ENCODE measurements at regions of chr7 and their contacts with region 1.

Region 1: GRCh38 chr7:111029574-111030251 is 61.2 kb upstream of the LRRN3 start:
- DNase-seq: peak; percentile 44
- ATAC-seq: peak; percentile 9
- H3K4me3 Mint-ChIP-seq: no peak overlapping the region
- H3K27ac Mint-ChIP-seq: peak overlapping the region; percentile 83
- H3K4me1 Mint-ChIP-seq: peaks cover 53% of the 10 kb centered on the region
- H3K27me3 Mint-ChIP-seq: no peaks in the 10 kb centered on the region

Region 2: GRCh38 chr7:110704219-110704618 is 325.5 kb before region 1 on chr7:
- CTCF ChIA-PET with region 1: no interaction called
- DNase-seq: no peak
- ATAC-seq: no peak
- H3K4me3 Mint-ChIP-seq: no peak overlapping the region
- H3K27ac Mint-ChIP-seq: no peak overlapping the region
- H3K4me1 Mint-ChIP-seq: no peaks in the 10 kb centered on the region
- H3K27me3 Mint-ChIP-seq: no peaks in the 10 kb centered on the region

Region 3: GRCh38 chr7:110994028-110994967 is 35.4 kb before region 1 on chr7:
- CTCF ChIA-PET with region 1: no interaction called
- DNase-seq: no peak
- ATAC-seq: peak; percentile 61
- H3K4me3 Mint-ChIP-seq: no peak overlapping the region
- H3K27ac Mint-ChIP-seq: peak overlapping the region; percentile 42
- H3K4me1 Mint-ChIP-seq: peaks cover 21% of the 10 kb centered on the region
- H3K27me3 Mint-ChIP-seq: no peaks in the 10 kb centered on the region

Region 4: GRCh38 chr7:111082351-111082750 is 52.6 kb after region 1 on chr7:
- CTCF ChIA-PET with region 1: interaction called, 13 read pairs
- DNase-seq: no peak
- ATAC-seq: peak; percentile 14
- H3K4me3 Mint-ChIP-seq: peak overlapping the region; percentile 63
- H3K27ac Mint-ChIP-seq: peak overlapping the region; percentile 97
- H3K4me1 Mint-ChIP-seq: peaks cover 79% of the 10 kb centered on the region
- H3K27me3 Mint-ChIP-seq: no peaks in the 10 kb centered on the region

Measured in activated CD8-positive, alpha-beta memory T cell treated with anti-CD3 and anti-CD28 coated beads, Interleukin-2, amount 10 ng/mL, durations not matched to agents 7 days and 5 days (primary cell).